Activated CD4-positive, alpha-beta memory T cell treated with anti-CD3 and anti-CD28 coated beads, Interleukin-2, amount 10 ng/mL, durations not matched to agents 7 days and 5 days (primary cell): ENCODE measurements at regions of chr1 and their contacts with region 1.

Region 1: DNA sequence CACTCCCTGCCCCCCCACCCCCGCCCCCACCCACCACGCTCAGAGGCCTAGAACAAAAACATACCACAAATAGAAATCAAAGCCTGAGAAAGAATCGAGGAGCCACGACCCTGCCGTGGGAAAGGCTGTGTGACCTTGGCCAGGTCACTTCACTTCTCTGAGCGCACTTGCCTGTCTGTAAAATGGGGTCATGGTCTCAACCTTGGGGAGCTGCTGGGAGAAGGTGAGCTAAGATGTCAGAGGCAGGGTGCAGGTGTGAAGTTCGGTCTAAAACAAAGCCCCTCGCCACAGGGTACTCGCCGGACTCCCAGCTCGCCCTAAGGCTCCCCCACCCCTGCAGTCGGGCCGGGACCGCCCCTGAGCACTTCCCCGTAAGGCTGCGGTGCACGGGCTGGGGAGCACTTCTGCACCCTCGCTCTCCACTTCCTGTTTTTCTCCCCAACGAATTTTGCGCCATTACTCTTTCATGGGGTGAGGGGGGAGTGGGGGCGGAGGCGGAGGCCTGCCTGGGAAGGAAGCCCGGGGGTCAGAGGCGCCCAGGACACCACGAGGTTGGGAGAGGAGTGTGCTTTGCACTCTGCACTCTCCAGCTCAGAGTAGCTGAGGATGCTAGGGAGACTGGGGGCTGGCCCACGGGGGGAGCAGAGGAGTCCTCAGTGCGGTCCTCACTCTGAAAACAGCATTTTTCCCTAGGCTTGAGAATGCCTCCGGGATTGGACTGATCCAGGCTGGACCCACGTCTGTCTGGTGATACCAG is 21.9 kb upstream of the PIK3CD start:
- DNase-seq: peak; percentile 84
- H3K4me3 Mint-ChIP-seq: peak overlapping the region; percentile 87
- H3K27ac Mint-ChIP-seq: peak overlapping the region; percentile 97
- H3K4me1 Mint-ChIP-seq: peaks cover 67% of the 10 kb centered on the region
- H3K27me3 Mint-ChIP-seq: peaks cover 2% of the 10 kb centered on the region

Region 2: DNA sequence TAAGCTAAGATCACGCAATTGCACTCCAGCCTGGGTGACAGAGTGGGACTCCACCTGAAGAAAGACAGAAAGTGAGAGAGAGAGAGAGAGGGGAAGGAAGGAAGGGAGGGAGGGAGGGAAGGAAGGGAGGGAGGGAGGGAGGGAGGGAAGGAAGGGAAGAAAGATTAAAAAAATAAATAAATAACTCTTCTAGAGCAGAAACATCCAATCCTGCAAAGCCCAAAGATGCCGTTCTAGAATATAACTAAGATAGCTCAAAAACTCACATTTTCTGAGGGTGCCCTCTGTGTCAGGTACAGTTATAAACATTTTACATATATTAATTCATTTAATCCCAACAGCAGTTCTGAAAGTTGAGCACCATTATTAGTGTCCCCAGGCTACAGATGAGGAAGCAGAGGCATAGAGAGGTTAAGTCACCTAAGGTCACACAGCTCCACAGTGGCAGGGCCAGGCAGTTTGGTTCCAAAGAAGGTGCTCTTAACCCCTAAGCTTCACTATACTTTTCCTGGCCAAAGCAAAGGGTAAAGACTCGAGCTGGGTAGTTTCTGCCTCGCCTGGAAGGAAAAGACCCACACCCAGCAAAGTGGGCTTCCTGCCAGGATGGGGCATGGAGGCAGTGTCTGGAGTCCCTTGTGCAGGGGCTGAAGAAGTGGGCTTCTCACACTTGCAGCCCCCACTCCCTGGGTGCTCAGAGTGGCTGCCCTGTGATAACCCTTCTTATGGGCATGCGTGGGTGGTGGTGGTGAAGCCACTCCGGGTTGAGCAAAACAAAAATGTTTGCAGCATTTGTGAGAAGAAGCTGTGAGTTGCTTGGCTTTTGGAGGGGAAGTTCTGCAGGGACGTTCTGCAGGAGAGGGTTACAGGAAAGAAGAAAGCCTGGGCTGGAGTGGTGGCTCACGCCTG is 14.0 kb after region 1 on chr1:
- CTCF ChIA-PET with region 1: interaction called, 26 read pairs
- POLR2A ChIA-PET with region 1: interaction called, 39 read pairs
- DNase-seq: no peak
- H3K4me3 Mint-ChIP-seq: no peak overlapping the region
- H3K27ac Mint-ChIP-seq: peak overlapping the region; percentile 44
- H3K4me1 Mint-ChIP-seq: peaks cover 44% of the 10 kb centered on the region
- H3K27me3 Mint-ChIP-seq: no peaks in the 10 kb centered on the region

Region 3: GRCh38 chr1:9689011-9689706 is 59.5 kb after region 1 on chr1:
- CTCF ChIA-PET with region 1: interaction called, 9 read pairs
- POLR2A ChIA-PET with region 1: interaction called, 22 read pairs
- DNase-seq: peak; percentile 84
- H3K4me3 Mint-ChIP-seq: peak overlapping the region; percentile 62
- H3K27ac Mint-ChIP-seq: no peak overlapping the region
- H3K4me1 Mint-ChIP-seq: peaks cover 62% of the 10 kb centered on the region
- H3K27me3 Mint-ChIP-seq: no peaks in the 10 kb centered on the region

Region 4: DNA sequence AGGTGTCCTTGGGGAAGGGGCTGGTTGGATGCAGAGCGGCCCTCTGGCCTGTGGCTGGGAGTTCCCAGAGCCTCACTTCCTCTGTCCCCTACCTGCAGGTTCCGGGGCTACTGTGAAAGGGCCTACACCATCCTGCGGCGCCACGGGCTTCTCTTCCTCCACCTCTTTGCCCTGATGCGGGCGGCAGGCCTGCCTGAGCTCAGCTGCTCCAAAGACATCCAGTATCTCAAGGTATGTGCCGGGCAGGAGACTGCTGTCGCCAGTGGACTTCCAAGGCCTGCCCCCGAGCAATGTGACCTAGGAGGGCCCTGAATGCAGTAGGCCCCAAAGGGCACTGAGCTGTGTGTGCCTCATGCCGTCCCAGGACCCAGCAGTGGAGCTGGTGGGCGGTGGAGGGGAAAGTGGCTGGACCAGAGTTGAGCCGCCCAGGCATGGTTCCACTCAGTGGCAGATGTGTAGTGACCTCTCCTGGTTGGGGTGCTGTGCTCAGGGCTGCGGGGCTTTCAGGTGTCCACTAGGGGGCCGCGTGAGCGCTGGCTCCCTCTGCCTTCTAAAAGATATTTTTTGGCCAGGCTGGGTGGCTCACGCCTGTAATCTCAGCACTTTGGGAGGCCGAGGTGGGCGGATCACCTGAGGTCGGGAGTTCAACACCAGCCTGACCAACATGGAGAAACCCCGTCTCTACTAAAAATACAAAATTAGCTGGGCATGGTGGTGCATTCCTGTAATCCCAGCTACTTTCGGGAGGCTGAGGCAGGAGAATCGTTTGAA is 95.3 kb after region 1 on chr1:
- CTCF ChIA-PET with region 1: interaction called, 89 read pairs
- POLR2A ChIA-PET with region 1: interaction called, 272 read pairs
- DNase-seq: peak; percentile 76
- H3K4me3 Mint-ChIP-seq: no peak overlapping the region
- H3K27ac Mint-ChIP-seq: peak overlapping the region; percentile 27
- H3K4me1 Mint-ChIP-seq: peaks cover 57% of the 10 kb centered on the region
- H3K27me3 Mint-ChIP-seq: no peaks in the 10 kb centered on the region

Region 5: GRCh38 chr1:9784508-9785133 is 155.0 kb after region 1 on chr1:
- CTCF ChIA-PET with region 1: interaction called, 20 read pairs
- POLR2A ChIA-PET with region 1: interaction called, 3 read pairs
- DNase-seq: peak; percentile 68
- H3K4me3 Mint-ChIP-seq: no peak overlapping the region
- H3K27ac Mint-ChIP-seq: no peak overlapping the region
- H3K4me1 Mint-ChIP-seq: peaks cover 54% of the 10 kb centered on the region
- H3K27me3 Mint-ChIP-seq: no peaks in the 10 kb centered on the region